K562 (cell line): ENCODE measurements at regions of chr7 and their contacts with region 1.

Region 1: GRCh38 chr7:95476904-95477594 is 8.7 kb upstream of the ASB4 start:
- DNase-seq: peak; percentile 73 to 77 (median 76)
- ATAC-seq: peak; percentile 85
- H3K4me3 ChIP-seq: no peak overlapping the region
- H3K27ac ChIP-seq: no peak overlapping the region
- H3K4me1 ChIP-seq: no peaks in the 10 kb centered on the region
- H3K27me3 ChIP-seq: peaks cover 0 to 9% of the 10 kb centered on the region in 2 experiments; a peak in 3 of 5 replicates
- CTCF ChIP-seq: peak; percentile 65 to 89 (median 73)
- EP300 ChIP-seq: no peak
- POLR2A ChIP-seq: no peak
- RAD21 ChIP-seq: peak; percentile 82 to 85

Region 2: GRCh38 chr7:94295850-94296249 is 1181.2 kb before region 1 on chr7:
- CTCF ChIA-PET with region 1: no interaction called
- POLR2A ChIA-PET with region 1: no interaction called
- in situ Hi-C with region 1: no loop called
- intact Hi-C with region 1: loop called (anchors 10 kb)
- DNase-seq: no peak
- ATAC-seq: peak; percentile 79
- H3K4me3 ChIP-seq: no peak overlapping the region
- H3K27ac ChIP-seq: no peak overlapping the region
- H3K4me1 ChIP-seq: no peaks in the 10 kb centered on the region
- H3K27me3 ChIP-seq: no peaks in the 10 kb centered on the region
- CTCF ChIP-seq: peak in 2 of 3 experiments; percentile 12 to 29; a peak in 2 of 6 replicates
- EP300 ChIP-seq: no peak
- POLR2A ChIP-seq: no peak
- RAD21 ChIP-seq: peak in 1 of 2 experiments; percentile 57; a peak in 2 of 4 replicates

Region 3: DNA sequence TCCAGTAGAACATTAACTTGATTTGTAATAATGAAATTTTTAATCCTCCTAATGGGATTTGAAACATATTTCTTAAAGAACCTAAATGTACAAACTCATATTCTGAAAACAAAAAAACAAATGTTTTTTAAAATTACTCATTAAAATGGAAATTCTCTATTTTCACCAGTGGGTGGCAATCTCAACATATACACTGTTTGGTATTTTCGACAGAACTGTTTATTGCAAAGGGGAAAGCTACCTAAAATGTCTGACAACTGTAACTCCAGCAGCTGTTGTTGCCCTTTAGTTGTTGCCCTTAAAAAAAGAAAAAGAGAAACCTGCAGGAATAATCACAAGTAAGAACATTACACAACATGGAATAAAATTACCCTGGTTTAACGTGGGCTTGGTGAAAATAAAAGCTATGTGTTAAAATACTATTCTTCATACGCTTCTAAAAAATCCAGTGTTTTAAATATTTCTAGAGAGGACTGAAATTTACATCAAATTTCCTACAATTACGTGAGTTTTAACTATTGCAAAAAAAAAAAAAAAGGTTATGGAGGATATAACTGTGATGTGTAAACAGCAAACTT is 1027.8 kb before region 1 on chr7:
- CTCF ChIA-PET with region 1: interaction called, 5 read pairs
- POLR2A ChIA-PET with region 1: no interaction called
- in situ Hi-C with region 1: loop called (anchors 25 kb)
- intact Hi-C with region 1: loop called (anchors 2 kb)
- DNase-seq: peak; percentile 21 to 34 (median 26)
- ATAC-seq: peak; percentile 65
- H3K4me3 ChIP-seq: no peak overlapping the region
- H3K27ac ChIP-seq: no peak overlapping the region
- H3K4me1 ChIP-seq: no peaks in the 10 kb centered on the region
- H3K27me3 ChIP-seq: no peaks in the 10 kb centered on the region
- CTCF ChIP-seq: peak; percentile 32 to 68 (median 38); a peak in 3 of 6 replicates
- EP300 ChIP-seq: no peak
- POLR2A ChIP-seq: no peak
- RAD21 ChIP-seq: peak; percentile 74 to 80

Region 4: DNA sequence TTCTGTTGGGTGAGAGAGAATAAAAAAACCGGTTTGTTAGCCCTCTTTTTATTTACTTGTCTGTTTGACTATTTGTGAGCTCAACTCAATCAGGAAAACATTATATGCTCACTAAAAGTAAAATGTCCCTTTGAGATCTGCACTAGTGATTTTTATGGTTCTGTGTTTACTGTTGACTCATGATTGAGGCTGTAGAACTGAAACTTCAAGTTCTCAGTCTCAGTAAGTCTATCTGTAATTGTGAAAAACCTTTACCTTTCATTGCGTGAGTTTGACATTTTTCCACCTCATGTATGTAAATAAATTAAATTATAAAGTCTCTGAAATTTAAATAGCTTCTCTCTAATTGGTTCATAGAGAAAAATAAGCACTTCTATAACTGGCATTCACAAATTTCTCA is 984.5 kb before region 1 on chr7:
- CTCF ChIA-PET with region 1: no interaction called
- POLR2A ChIA-PET with region 1: no interaction called
- in situ Hi-C with region 1: no loop called
- intact Hi-C with region 1: no loop called
- DNase-seq: no peak
- ATAC-seq: no peak
- H3K4me3 ChIP-seq: no peak overlapping the region
- H3K27ac ChIP-seq: no peak overlapping the region
- H3K4me1 ChIP-seq: no peaks in the 10 kb centered on the region
- H3K27me3 ChIP-seq: peaks cover 0 to 7% of the 10 kb centered on the region in 2 experiments; a peak in 1 of 5 replicates
- CTCF ChIP-seq: no peak
- EP300 ChIP-seq: no peak
- POLR2A ChIP-seq: no peak
- RAD21 ChIP-seq: no peak

Region 5: DNA sequence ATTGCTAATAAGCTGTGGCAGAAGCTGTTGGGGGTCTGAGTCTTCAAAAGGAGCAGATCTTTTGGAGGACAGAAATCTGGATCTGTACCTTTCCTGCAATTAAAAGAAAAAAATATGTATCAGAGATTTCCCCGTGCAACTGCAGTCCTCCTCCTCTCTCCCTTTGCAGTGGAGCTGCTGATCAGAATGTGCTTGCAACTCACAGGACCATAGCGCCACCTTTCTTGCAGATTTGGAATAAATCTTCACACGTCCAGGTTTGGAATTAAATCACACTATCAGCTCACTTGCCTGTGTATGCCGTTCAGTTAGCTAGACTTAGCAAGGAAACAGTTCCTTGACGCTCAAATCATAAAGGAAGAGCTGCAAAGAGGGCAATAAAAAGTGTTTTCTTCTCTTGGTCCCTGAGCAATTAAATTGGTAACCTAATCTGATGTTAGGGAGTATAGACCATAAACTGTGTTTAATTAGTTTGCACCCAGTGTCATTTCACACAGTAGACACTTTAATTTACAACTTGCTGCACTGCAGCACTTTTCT is 230.1 kb before region 1 on chr7:
- CTCF ChIA-PET with region 1: no interaction called
- POLR2A ChIA-PET with region 1: no interaction called
- in situ Hi-C with region 1: no loop called
- intact Hi-C with region 1: loop called (anchors 2 kb)
- DNase-seq: peak; percentile 26 to 71 (median 36)
- ATAC-seq: peak; percentile 89
- H3K4me3 ChIP-seq: no peak overlapping the region
- H3K27ac ChIP-seq: no peak overlapping the region
- H3K4me1 ChIP-seq: no peaks in the 10 kb centered on the region
- H3K27me3 ChIP-seq: no peaks in the 10 kb centered on the region
- CTCF ChIP-seq: peak; percentile 62 to 77 (median 68)
- EP300 ChIP-seq: no peak
- POLR2A ChIP-seq: no peak
- RAD21 ChIP-seq: peak; percentile 39 to 67; a peak in 2 of 4 replicates

Region 6: GRCh38 chr7:95357623-95358022 is 119.4 kb before region 1 on chr7:
- CTCF ChIA-PET with region 1: interaction called, 3 read pairs
- POLR2A ChIA-PET with region 1: no interaction called
- in situ Hi-C with region 1: no loop called
- intact Hi-C with region 1: loop called (anchors 1 kb)
- DNase-seq: no peak
- ATAC-seq: no peak
- H3K4me3 ChIP-seq: no peak overlapping the region
- H3K27ac ChIP-seq: no peak overlapping the region
- H3K4me1 ChIP-seq: no peaks in the 10 kb centered on the region
- H3K27me3 ChIP-seq: no peaks in the 10 kb centered on the region
- CTCF ChIP-seq: 0 out of 6 replicates have a peak, but pooled peaks of 2 of the 3 experiments have one; percentile 7 to 11
- EP300 ChIP-seq: no peak
- POLR2A ChIP-seq: no peak
- RAD21 ChIP-seq: peak in 1 of 2 experiments; percentile 43; a peak in 2 of 4 replicates

Region 7: DNA sequence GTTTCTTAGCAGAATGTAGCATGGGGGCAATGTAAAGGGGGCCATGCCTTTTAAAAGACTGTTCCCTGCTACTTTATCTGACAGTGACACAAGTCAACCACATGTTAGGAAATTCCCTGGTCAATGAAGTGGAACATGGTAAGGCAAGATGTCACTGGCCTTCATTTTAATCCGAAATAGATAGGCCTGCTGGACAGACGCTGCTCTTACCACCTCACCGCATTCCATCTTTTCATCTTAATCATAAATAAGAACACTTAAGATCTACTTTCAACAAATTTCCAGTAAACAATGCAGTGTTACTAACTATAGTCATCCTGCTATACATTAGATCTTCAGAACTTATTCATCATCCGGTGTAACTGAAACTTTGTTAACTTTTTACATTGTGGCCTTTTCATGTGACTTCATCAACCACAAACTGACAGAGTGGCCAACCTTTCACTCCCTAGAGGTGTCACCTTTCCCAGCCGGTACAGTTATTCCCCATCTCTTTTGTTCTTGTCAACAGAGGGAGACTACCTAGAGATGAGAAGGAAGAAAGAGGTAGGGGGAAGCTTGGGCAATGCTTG is 24.3 kb after region 1 on chr7:
- CTCF ChIA-PET with region 1: no interaction called
- POLR2A ChIA-PET with region 1: no interaction called
- in situ Hi-C with region 1: no loop called
- intact Hi-C with region 1: no loop called
- DNase-seq: no peak
- ATAC-seq: no peak
- H3K4me3 ChIP-seq: no peak overlapping the region
- H3K27ac ChIP-seq: no peak overlapping the region
- H3K4me1 ChIP-seq: no peaks in the 10 kb centered on the region
- H3K27me3 ChIP-seq: peaks cover 0 to 3% of the 10 kb centered on the region in 2 experiments; a peak in 1 of 5 replicates
- CTCF ChIP-seq: no peak
- EP300 ChIP-seq: no peak
- POLR2A ChIP-seq: no peak
- RAD21 ChIP-seq: no peak

Region 8: GRCh38 chr7:95642173-95642572 is 165.1 kb after region 1 on chr7:
- CTCF ChIA-PET with region 1: no interaction called
- POLR2A ChIA-PET with region 1: no interaction called
- in situ Hi-C with region 1: no loop called
- intact Hi-C with region 1: no loop called
- DNase-seq: no peak
- ATAC-seq: no peak
- H3K4me3 ChIP-seq: no peak overlapping the region
- H3K27ac ChIP-seq: no peak overlapping the region
- H3K4me1 ChIP-seq: no peaks in the 10 kb centered on the region
- H3K27me3 ChIP-seq: no peaks in the 10 kb centered on the region
- CTCF ChIP-seq: no peak
- EP300 ChIP-seq: no peak
- POLR2A ChIP-seq: no peak
- RAD21 ChIP-seq: no peak

Region 9: GRCh38 chr7:96397936-96398598 is 921.0 kb after region 1 on chr7:
- CTCF ChIA-PET with region 1: no interaction called
- POLR2A ChIA-PET with region 1: no interaction called
- in situ Hi-C with region 1: no loop called
- intact Hi-C with region 1: no loop called
- DNase-seq: no peak
- ATAC-seq: peak; percentile 27; the same call in 2 of the 3 replicates
- H3K4me3 ChIP-seq: no peak overlapping the region
- H3K27ac ChIP-seq: no peak overlapping the region
- H3K4me1 ChIP-seq: no peaks in the 10 kb centered on the region
- H3K27me3 ChIP-seq: peaks cover 0 to 10% of the 10 kb centered on the region in 2 experiments; a peak in 3 of 5 replicates
- CTCF ChIP-seq: no peak
- EP300 ChIP-seq: no peak
- POLR2A ChIP-seq: no peak
- RAD21 ChIP-seq: no peak